ENCODE measurements at regions of chr10 and their contacts with region 1.

Region 1: DNA sequence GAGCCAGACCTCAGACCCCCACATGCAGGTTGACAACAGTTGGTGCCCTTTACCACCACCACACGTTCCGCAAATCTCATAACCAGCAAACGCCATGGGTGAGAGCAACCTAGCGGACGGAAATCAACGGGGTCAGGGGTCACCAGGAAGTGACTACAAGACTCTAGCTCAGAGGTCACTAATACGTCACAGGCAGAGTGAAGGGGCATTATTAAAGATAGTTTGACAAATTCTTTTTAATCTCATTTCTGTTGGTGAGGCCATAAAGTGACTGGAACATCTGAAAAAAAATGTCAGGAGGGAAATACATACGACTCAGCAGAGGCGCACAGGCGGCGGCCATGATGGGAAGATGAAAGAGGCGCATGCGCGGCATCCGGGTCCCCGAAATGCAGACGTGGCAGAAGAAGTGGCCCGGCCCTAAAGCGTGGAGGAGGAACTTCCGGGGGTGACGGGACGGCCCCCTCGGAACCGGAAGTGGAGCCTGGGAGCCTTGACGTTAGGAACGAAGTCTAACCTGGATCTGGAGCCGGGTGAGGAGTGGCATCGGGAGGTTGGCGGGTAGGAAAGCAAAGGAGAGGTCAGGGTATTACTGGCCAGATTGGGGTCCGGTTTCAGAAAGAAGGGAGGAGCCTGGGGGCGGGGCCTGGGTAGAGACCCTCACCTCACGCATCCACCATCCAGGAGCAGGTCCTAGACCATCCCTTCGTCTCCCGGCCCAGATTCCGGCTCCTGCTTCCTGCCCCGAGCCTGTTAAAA is at the start of gene SEC24C:
- DNase-seq: peak; percentile 96 to 97
- ATAC-seq: peak; percentile 94 to 96
- H3K4me3 ChIP-seq: peak within 1 kb of the TSS; percentile 72
- H3K27ac ChIP-seq: peak within 1 kb of the TSS; percentile 90 to 94
- H3K4me1 ChIP-seq: peaks cover 35% of the 10 kb centered on the region
- CTCF ChIP-seq: no peak
- EP300 ChIP-seq: no peak
- POLR2A ChIP-seq: peak; percentile 53
- RAD21 ChIP-seq: no peak
- polyA plus RNA-seq, gene SEC24C: 84.7 and 121 TPM in 2 replicates

Region 2: GRCh38 chr10:73601486-73601921 is 142.6 kb before region 1 on chr10:
- CTCF ChIA-PET with region 1: no interaction called
- POLR2A ChIA-PET with region 1: no interaction called
- DNase-seq: peak in 1 of 2 experiments; percentile 42
- ATAC-seq: peak; percentile 54 to 61
- H3K4me3 ChIP-seq: no peak overlapping the region
- H3K27ac ChIP-seq: no peak overlapping the region
- H3K4me1 ChIP-seq: peaks cover 7% of the 10 kb centered on the region; the same call in 2 of the 3 replicates
- CTCF ChIP-seq: no peak
- EP300 ChIP-seq: no peak
- POLR2A ChIP-seq: no peak
- RAD21 ChIP-seq: no peak

Region 3: DNA sequence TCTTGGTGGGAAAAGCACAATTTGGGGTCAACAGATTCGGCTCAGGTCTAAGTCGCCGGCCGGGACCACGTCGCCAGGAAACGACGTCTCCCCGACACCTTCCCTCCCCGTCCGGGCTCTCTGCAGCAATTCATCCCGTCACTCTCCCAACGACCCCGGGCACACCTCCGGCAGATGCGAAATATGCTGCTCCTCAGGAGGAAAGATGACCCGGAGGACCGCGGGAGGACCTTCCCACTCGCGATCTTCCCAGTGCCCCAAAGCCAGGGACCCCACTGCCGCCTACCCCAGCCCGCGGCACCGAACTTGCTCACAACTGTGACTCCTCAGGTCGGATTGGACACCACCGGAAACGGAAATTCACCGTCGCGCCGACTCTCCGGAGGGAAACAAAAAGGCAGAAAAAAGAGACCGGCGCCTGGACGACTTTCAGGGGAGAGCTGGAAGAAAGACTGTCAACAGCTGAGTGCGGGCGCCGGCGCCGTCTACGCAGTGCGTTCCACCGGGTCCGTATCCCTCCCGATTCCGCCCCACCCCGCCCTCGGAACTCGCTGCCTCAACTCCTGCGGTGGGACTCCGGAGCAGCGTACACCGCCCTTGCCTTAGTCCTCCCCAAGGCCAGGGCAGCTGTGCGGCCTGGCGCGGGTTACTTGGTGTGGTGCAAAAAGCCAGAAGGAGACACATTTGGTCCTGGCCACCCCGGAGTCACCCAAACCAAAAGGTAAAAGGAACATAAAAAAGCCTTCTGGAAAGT is 13.8 kb before region 1 on chr10:
- CTCF ChIA-PET with region 1: interaction called, 7 read pairs
- POLR2A ChIA-PET with region 1: interaction called, 45 read pairs
- DNase-seq: peak; percentile 75 to 93
- ATAC-seq: peak; percentile 93 to 94
- H3K4me3 ChIP-seq: peak overlapping the region; percentile 73
- H3K27ac ChIP-seq: peak overlapping the region; percentile 93 to 96
- H3K4me1 ChIP-seq: peaks cover 10% of the 10 kb centered on the region
- CTCF ChIP-seq: no peak
- EP300 ChIP-seq: no peak
- POLR2A ChIP-seq: peak; percentile 87
- RAD21 ChIP-seq: no peak; a peak in 1 of 5 replicates

Region 4: DNA sequence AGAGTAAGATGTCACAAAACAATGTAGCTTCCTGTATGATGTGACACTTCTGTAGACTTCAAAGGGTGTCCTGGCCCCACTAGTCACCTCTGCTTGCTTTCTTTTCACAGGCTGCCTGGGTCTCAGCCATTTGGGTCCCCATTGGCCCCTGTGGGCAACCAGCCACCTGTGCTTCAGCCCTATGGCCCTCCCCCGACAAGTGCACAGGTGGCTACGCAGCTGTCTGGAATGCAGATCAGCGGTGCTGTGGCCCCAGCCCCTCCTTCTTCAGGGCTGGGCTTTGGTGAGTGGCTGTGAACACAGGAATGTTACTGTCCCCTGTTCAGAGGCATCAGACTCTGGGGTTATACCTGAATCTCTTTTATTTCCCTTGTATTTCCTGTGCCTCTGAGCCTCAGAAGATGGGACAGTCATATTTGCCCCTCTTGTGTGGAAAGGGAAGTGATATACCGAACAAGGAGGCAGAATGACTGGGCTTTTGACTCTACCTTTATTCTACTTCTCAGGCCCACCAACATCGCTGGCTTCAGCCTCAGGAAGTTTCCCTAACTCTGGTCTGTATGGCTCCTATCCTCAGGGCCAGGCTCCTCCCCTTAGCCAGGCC is 15.5 kb after region 1 on chr10:
- CTCF ChIA-PET with region 1: no interaction called
- POLR2A ChIA-PET with region 1: no interaction called
- DNase-seq: no peak
- ATAC-seq: no peak
- H3K4me3 ChIP-seq: no peak overlapping the region
- H3K27ac ChIP-seq: no peak overlapping the region
- H3K4me1 ChIP-seq: peaks cover 14% of the 10 kb centered on the region; the same call in 2 of the 3 replicates
- CTCF ChIP-seq: no peak
- EP300 ChIP-seq: no peak
- POLR2A ChIP-seq: no peak
- RAD21 ChIP-seq: no peak

Region 5: DNA sequence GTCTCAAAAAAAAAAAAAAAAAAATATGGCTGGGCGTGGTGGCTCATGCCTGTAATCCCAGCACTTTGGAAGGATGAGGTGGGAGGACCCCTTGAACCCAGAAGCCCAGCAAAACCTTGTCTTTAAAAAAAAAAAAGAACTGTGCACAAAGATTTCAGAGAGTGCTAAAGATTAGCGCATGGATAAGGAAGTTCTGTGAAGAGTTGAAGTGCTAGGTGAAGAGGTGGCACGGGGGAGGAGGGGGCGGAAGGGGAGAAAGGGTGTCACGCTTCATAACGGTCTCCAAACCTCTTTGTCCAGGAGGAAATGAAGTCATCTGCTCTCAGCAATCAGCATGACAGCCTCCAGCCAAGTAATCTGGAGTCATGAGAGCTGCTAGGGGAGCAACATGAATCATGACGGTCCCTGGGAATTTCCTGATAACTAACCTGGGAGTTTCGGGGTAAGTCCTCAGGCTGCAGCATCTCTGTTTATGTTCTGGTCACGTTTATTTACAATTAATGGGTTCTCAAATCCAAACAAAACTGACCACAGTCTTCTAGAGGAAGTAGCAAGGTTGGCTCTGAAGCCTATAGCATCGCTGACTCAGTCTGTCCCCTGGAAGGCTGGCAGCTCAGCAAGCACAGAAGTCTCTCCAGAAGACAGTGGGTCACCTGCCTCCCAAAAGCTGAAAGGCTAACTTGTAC is 164.9 kb after region 1 on chr10:
- CTCF ChIA-PET with region 1: no interaction called
- POLR2A ChIA-PET with region 1: no interaction called
- DNase-seq: peak; percentile 81 to 93
- ATAC-seq: peak; percentile 51; a peak in 5 of 6 replicates
- H3K4me3 ChIP-seq: peak overlapping the region; percentile 60; the same call in 2 of the 3 replicates
- H3K27ac ChIP-seq: peak overlapping the region; percentile 91 to 96
- H3K4me1 ChIP-seq: peaks cover 79% of the 10 kb centered on the region
- CTCF ChIP-seq: no peak
- EP300 ChIP-seq: peak; percentile 55 to 74; a peak in 3 of 5 replicates
- POLR2A ChIP-seq: no peak
- RAD21 ChIP-seq: peak in 1 of 2 experiments; percentile 13; a peak in 1 of 5 replicates